ENCODE measurements at regions of chr11 and their contacts with region 1.

Region 1: DNA sequence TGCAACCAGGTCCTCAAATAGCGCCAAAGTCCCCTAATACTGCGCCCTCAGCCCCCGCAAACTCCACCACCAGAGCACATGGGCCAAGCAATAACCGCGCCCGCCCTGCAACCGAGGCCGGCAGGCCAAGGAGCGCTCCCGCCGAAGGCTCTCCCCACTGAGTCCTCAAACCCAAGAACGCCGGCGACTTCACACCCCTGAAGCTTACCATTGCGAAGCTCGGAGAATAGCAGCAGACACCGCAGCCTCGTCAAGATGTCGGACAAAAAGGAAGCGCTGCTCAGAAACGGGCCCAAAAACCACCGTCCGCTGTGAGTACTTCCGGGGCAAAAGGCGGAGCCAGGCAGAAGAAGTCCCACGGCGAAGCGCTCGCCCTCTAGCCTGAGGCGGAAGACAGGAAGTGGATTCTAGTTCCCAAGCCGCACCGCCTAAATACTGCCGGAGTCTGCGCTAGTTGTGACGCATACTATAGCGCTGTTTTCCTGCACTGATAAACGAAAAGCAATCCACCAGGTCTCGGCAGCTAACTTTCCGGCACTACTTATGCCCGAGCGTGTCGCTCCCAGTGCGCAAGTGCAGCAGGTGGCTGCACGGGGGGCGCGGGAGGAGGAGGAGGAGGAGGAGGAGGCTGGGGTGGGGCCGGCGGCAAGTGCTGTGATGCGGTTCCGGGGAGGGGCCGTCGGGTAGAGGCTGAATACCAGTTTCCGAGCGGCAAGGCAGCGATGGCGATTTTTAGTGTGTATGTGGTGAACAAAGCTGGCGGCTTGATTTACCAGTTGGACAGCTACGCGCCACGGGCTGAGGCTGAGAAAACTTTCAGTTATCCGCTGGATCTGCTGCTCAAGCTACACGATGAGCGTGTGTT is at the starts of genes RPS25 and TRAPPC4:
- DNase-seq: peak; percentile 98
- H3K4me3 Mint-ChIP-seq: peak within 1 kb of the TSS; percentile 100
- H3K27ac Mint-ChIP-seq: peak within 1 kb of the TSS; percentile 99
- H3K4me1 Mint-ChIP-seq: peaks cover 35% of the 10 kb centered on the region
- H3K27me3 Mint-ChIP-seq: no peaks in the 10 kb centered on the region
- total RNA-seq, gene RPS25: 1,641 and 1,650 TPM in 2 replicates
- total RNA-seq, gene TRAPPC4: 141 and 151 TPM in 2 replicates

Region 2: GRCh38 chr11:118088477-118088920 is 929.8 kb before region 1 on chr11:
- intact Hi-C with region 1: no loop called
- DNase-seq: no peak
- H3K4me3 Mint-ChIP-seq: no peak overlapping the region
- H3K27ac Mint-ChIP-seq: no peak overlapping the region
- H3K4me1 Mint-ChIP-seq: no peaks in the 10 kb centered on the region
- H3K27me3 Mint-ChIP-seq: peaks cover 7% of the 10 kb centered on the region

Region 3: GRCh38 chr11:118838905-118839553 is 179.3 kb before region 1 on chr11:
- intact Hi-C with region 1: no loop called
- DNase-seq: no peak
- H3K4me3 Mint-ChIP-seq: no peak overlapping the region
- H3K27ac Mint-ChIP-seq: peak overlapping the region; percentile 14
- H3K4me1 Mint-ChIP-seq: peaks cover 28% of the 10 kb centered on the region
- H3K27me3 Mint-ChIP-seq: no peaks in the 10 kb centered on the region

Region 4: GRCh38 chr11:118997627-118998387 is 20.5 kb before region 1 on chr11 and contains the start of gene CENATAC:
- intact Hi-C with region 1: loop called (anchors 1 kb)
- DNase-seq: peak; percentile 99
- H3K4me3 Mint-ChIP-seq: peak within 1 kb of the TSS; percentile 90
- H3K27ac Mint-ChIP-seq: peak within 1 kb of the TSS; percentile 94
- H3K4me1 Mint-ChIP-seq: peaks cover 24% of the 10 kb centered on the region
- H3K27me3 Mint-ChIP-seq: no peaks in the 10 kb centered on the region
- total RNA-seq, gene CENATAC: 46.3 and 47.1 TPM in 2 replicates

Region 5: GRCh38 chr11:119030329-119031049 is 12.2 kb after region 1 on chr11 and contains the start of gene SLC37A4:
- intact Hi-C with region 1: loop called (anchors 1 kb)
- DNase-seq: peak; percentile 100
- H3K4me3 Mint-ChIP-seq: peak within 1 kb of the TSS; percentile 83
- H3K27ac Mint-ChIP-seq: peak within 1 kb of the TSS; percentile 89
- H3K4me1 Mint-ChIP-seq: peaks cover 19% of the 10 kb centered on the region
- H3K27me3 Mint-ChIP-seq: no peaks in the 10 kb centered on the region
- total RNA-seq, gene SLC37A4: 28.8 and 31.6 TPM in 2 replicates

Region 6: DNA sequence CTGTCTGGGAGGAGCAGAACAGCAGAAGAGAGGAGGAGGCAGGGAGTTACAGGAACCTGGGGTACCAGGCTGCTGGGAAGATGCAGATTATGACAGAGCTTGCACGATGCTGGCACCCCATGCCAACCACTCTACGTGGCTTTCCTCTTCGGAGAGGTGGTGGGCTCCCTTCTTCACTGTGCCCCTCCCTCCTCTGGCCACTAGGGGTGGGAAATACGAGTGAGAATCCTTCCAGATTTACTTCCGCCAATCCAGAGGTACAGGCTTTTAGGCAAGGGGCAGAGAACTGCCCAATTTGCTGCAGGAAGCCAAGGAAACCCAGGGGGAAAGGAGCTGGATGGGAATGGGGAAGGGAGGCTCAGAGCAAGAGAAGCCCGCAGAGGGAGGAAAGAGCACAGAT is 26.4 kb after region 1 on chr11:
- intact Hi-C with region 1: no loop called
- DNase-seq: no peak
- H3K4me3 Mint-ChIP-seq: no peak overlapping the region
- H3K27ac Mint-ChIP-seq: no peak overlapping the region
- H3K4me1 Mint-ChIP-seq: peaks cover 7% of the 10 kb centered on the region
- H3K27me3 Mint-ChIP-seq: no peaks in the 10 kb centered on the region

Region 7: GRCh38 chr11:119084663-119085436 is 66.5 kb after region 1 on chr11 and contains the start of gene HMBS:
- intact Hi-C with region 1: loop called (anchors 1 kb)
- DNase-seq: peak; percentile 98
- H3K4me3 Mint-ChIP-seq: peak within 1 kb of the TSS; percentile 97
- H3K27ac Mint-ChIP-seq: peak within 1 kb of the TSS; percentile 95
- H3K4me1 Mint-ChIP-seq: peaks cover 24% of the 10 kb centered on the region
- H3K27me3 Mint-ChIP-seq: no peaks in the 10 kb centered on the region
- total RNA-seq, gene HMBS: 60.9 and 62.8 TPM in 2 replicates

Measured in activated CD4-positive, alpha-beta T cell treated with anti-CD3 and anti-CD28 coated beads, Interleukin-2, amount 10 ng/mL, durations not matched to agents 24 days and 14 days (primary cell).